HEK293 (cell line): ENCODE measurements at regions of chr11 and their contacts with region 1.

Region 1: DNA sequence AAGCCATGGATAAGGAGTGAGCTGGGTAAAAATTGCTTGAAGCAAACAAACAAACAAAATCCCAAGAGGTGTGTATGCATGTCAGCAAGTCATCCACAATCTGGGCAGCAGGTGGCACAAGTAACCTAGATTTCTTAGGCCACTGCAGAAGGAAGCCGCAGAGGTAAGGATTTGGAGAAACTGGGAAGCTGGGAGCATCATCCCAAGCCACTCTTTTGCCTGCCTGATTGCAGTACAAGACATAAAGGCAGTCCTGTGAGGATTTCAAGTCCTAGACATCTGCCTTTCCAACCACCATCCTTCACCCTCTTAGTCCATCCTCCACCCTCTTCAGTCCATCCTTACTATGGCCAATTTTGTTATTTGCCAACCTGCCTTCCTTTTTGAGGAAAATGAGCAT is 67.2 kb upstream of the BMAL1 start:
- H3K4me3 ChIP-seq: no peak overlapping the region
- H3K27ac ChIP-seq: no peak overlapping the region
- H3K4me1 ChIP-seq: no peaks in the 10 kb centered on the region
- CTCF ChIP-seq: peak; percentile 55; the same call in 1 of the 2 replicates

Region 2: GRCh38 chr11:13008625-13009475 is 201.6 kb before region 1 on chr11 and contains the start of gene RASSF10:
- CTCF ChIA-PET with region 1: no interaction called
- POLR2A ChIA-PET with region 1: no interaction called
- H3K4me3 ChIP-seq: peak within 1 kb of the TSS; percentile 47
- H3K27ac ChIP-seq: no peak within 1 kb of the TSS
- H3K4me1 ChIP-seq: no peaks in the 10 kb centered on the region
- CTCF ChIP-seq: no peak

Region 3: DNA sequence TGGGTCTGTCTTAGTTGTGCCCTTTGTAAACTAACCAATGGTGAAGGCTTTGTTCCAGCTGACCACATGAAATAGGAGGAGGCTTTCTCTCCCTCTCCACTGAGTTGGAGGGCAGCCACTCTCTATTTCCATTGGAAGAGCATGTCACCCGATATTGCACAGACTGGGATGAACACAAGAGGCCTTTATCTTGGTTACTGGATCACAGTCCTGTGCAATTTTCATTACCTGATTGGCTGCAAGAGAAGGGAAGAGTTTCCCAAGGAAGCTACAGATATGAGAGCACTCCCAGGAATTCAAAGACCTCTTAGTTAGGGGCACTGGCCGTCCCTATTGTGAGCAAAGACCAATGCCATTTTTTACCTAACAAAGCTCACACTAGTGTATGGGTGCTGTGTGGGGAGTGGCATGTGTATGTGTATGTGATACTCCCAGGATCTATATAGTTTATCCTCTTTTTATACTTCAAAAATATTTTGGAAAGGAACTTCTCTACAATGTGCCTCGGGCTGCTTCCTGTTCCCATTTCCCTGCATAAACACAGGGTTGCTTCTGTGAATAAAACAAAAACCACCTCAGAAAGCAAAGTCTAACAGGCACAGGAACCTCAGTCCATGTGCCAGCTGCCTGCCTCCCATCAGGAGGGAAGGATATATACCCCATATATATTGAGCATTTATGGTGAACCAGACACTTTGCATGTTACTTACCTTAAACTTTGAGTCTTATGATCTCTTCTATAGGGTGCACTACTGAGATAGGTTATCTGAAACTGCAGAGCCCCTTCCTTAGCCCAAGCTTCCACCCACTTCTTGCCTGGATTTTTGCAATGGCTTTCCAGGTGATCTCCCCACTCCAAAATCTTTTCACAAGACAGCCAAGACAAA is 74.8 kb before region 1 on chr11:
- CTCF ChIA-PET with region 1: no interaction called
- POLR2A ChIA-PET with region 1: no interaction called
- H3K4me3 ChIP-seq: no peak overlapping the region
- H3K27ac ChIP-seq: no peak overlapping the region
- H3K4me1 ChIP-seq: no peaks in the 10 kb centered on the region
- CTCF ChIP-seq: no peak

Region 4: DNA sequence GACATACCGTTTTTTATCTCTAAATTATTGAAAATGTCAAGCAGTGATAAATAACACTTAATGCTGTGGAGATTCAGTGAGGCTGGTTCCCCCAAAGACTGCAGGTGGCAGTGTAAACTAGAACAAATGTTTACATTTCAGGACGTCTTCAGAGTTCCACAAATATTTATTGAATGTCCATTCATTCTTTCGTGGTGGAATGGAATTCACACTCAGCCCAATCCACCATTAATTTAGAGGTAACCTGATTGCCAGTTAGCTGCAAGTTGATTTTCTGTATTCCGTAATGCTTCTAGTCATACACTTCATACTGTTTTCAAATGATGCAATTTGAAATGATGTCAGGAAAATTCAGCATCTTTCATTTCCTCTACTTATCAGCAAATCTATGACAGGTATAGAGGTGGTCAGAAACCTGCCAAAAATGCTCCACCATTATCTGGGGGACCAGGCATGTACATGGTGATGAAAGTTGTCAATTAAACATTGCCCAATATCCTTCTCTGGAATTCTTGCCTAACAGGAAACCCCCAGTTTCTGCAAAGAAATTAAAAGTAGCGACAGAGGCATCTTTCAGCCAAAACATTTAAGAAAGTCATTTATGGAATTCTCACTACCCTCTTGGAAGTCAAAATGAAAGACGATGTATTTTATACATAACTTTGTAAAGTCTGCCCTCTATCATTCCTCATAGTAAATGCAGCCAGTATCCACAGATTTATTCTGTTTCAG is 27.2 kb before region 1 on chr11:
- CTCF ChIA-PET with region 1: no interaction called
- POLR2A ChIA-PET with region 1: no interaction called
- H3K4me3 ChIP-seq: no peak overlapping the region
- H3K27ac ChIP-seq: no peak overlapping the region
- H3K4me1 ChIP-seq: no peaks in the 10 kb centered on the region
- CTCF ChIP-seq: no peak

Region 5: GRCh38 chr11:13222285-13222684 is 11.9 kb after region 1 on chr11:
- CTCF ChIA-PET with region 1: interaction called, 12 read pairs
- POLR2A ChIA-PET with region 1: no interaction called
- H3K4me3 ChIP-seq: no peak overlapping the region
- H3K27ac ChIP-seq: no peak overlapping the region
- H3K4me1 ChIP-seq: no peaks in the 10 kb centered on the region
- CTCF ChIP-seq: no peak

Region 6: DNA sequence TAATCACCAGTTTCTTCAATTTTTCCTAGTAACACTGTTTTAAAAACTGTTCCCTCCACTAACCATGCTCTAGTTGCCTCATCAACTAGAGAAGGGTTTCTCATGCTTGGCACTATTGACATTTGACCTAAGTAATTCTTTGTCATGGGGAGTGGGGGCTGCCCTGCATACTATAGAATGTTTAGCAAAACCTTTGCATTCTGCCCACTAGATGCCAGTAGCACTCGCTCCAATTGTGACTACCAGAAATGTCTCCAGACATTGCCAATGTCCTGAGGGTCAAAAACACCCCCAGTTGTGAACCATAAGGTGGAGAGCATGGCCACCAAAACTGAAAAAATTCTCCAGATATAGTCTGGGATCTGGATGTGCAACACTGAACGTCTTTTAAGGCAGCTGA is 39.6 kb after region 1 on chr11:
- CTCF ChIA-PET with region 1: interaction called, 11 read pairs
- POLR2A ChIA-PET with region 1: no interaction called
- H3K4me3 ChIP-seq: no peak overlapping the region
- H3K27ac ChIP-seq: no peak overlapping the region
- H3K4me1 ChIP-seq: no peaks in the 10 kb centered on the region
- CTCF ChIP-seq: no peak

Region 7: GRCh38 chr11:13335319-13335718 is 124.9 kb after region 1 on chr11:
- CTCF ChIA-PET with region 1: interaction called, 114 read pairs
- POLR2A ChIA-PET with region 1: no interaction called
- H3K4me3 ChIP-seq: no peak overlapping the region
- H3K27ac ChIP-seq: no peak overlapping the region
- H3K4me1 ChIP-seq: no peaks in the 10 kb centered on the region
- CTCF ChIP-seq: no peak

Region 8: GRCh38 chr11:13354335-13354734 is 143.9 kb after region 1 on chr11:
- CTCF ChIA-PET with region 1: interaction called, 27 read pairs
- POLR2A ChIA-PET with region 1: no interaction called
- H3K4me3 ChIP-seq: no peak overlapping the region
- H3K27ac ChIP-seq: no peak overlapping the region
- H3K4me1 ChIP-seq: no peaks in the 10 kb centered on the region
- CTCF ChIP-seq: no peak